ENCODE measurements at regions of chr4 and their contacts with region 1.

Region 1: GRCh38 chr4:142354794-142355420 is 491.2 kb downstream of the INPP4B start:
- DNase-seq: no peak
- ATAC-seq: peak in 1 of 4 donors; percentile 37
- H3K4me3 ChIP-seq: no peak overlapping the region
- H3K27ac ChIP-seq: no peak overlapping the region
- H3K4me1 ChIP-seq: no peaks in the 10 kb centered on the region
- H3K27me3 ChIP-seq: no peaks in the 10 kb centered on the region
- CTCF ChIP-seq: no peak
- POLR2A ChIP-seq: no peak

Region 2: DNA sequence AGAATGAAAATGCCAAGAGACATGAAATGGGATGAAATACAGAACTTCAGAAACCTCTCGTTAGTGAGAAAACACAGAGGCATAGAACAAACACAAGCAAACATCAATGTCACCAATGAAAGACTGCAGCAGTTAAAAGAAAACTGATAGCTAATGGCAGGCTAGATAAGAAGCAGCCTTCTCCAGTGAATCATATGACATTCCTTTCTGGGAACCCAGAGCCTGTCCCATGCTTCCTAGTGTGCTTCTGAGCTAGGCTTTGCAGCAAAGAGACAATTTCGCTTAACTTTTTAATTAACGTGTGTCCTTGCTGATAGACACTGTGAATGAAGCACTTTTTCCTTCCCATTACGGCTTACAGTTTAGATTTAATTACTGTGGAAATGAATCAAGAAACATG is 273.9 kb before region 1 on chr4:
- intact Hi-C with region 1: no loop called
- DNase-seq: no peak
- ATAC-seq: no peak
- H3K4me3 ChIP-seq: no peak overlapping the region
- H3K27ac ChIP-seq: no peak overlapping the region
- H3K4me1 ChIP-seq: no peaks in the 10 kb centered on the region
- H3K27me3 ChIP-seq: no peaks in the 10 kb centered on the region
- CTCF ChIP-seq: no peak
- POLR2A ChIP-seq: no peak

Region 3: DNA sequence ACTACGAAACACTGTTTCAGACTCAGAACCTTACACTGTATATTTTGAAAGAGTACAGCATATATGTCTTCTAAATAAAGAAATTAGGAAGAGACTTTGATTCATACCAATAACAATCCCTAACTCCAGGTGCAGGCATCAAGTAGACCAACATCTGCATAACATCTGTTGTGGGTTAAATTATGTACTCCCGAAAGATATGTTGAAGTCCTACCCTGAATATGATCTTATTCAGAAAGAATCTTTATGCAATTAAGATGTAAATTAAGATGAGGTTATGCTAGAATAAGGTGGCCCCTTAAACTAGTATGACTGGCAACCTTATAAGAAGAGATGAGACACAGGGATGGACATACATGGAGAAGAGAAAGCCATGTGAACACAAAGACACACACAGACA is 373.3 kb after region 1 on chr4:
- intact Hi-C with region 1: loop called in 1 of 2 experiments (anchors 5 kb)
- DNase-seq: no peak
- ATAC-seq: no peak
- H3K4me3 ChIP-seq: no peak overlapping the region
- H3K27ac ChIP-seq: no peak overlapping the region
- H3K4me1 ChIP-seq: no peaks in the 10 kb centered on the region
- H3K27me3 ChIP-seq: no peaks in the 10 kb centered on the region
- CTCF ChIP-seq: no peak
- POLR2A ChIP-seq: no peak

Measured in right lobe of liver (tissue), 6 donors.